ENCODE measurements at regions of chr7 and their contacts with region 1.

Region 1: GRCh38 chr7:104603957-104604356 is 275.6 kb downstream of the LHFPL3 start:
- DNase-seq: no peak
- ATAC-seq: no peak
- H3K4me3 ChIP-seq: no peak overlapping the region
- H3K27ac ChIP-seq: no peak overlapping the region
- H3K4me1 ChIP-seq: no peaks in the 10 kb centered on the region
- H3K27me3 ChIP-seq: no peaks in the 10 kb centered on the region; the same call in 1 of the 2 replicates
- CTCF ChIP-seq: no peak

Region 2: DNA sequence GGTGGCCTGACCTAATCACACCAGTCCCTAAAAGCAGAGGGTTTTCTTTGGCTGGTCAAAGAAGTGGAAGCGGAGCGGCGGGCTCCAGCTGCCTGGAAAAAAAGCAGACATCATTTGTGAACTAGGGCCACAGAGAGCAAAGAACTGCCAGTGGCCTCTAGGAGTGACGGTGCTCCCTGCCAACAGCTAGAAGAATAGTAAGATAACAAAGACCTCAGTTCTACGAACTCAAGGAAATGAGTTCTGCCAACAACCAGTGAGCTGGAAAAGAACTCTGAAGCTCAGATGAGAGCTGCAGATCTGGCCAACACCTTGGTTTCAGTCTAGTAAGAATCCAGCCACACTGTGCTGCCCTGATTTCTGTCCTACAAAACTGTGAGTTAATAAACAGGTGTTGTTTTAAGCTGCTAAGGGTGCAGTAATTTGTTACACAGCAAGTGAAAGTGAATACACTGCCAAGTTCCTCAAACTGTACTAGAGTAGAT is 606.8 kb after region 1 on chr7:
- CTCF ChIA-PET with region 1: no interaction called
- POLR2A ChIA-PET with region 1: no interaction called
- in situ Hi-C with region 1: no loop called
- intact Hi-C with region 1: no loop called
- DNase-seq: no peak
- ATAC-seq: peak; percentile 51
- H3K4me3 ChIP-seq: no peak overlapping the region
- H3K27ac ChIP-seq: no peak overlapping the region
- H3K4me1 ChIP-seq: no peaks in the 10 kb centered on the region; the same call in 1 of the 2 replicates
- H3K27me3 ChIP-seq: no peaks in the 10 kb centered on the region
- CTCF ChIP-seq: no peak

Region 3: DNA sequence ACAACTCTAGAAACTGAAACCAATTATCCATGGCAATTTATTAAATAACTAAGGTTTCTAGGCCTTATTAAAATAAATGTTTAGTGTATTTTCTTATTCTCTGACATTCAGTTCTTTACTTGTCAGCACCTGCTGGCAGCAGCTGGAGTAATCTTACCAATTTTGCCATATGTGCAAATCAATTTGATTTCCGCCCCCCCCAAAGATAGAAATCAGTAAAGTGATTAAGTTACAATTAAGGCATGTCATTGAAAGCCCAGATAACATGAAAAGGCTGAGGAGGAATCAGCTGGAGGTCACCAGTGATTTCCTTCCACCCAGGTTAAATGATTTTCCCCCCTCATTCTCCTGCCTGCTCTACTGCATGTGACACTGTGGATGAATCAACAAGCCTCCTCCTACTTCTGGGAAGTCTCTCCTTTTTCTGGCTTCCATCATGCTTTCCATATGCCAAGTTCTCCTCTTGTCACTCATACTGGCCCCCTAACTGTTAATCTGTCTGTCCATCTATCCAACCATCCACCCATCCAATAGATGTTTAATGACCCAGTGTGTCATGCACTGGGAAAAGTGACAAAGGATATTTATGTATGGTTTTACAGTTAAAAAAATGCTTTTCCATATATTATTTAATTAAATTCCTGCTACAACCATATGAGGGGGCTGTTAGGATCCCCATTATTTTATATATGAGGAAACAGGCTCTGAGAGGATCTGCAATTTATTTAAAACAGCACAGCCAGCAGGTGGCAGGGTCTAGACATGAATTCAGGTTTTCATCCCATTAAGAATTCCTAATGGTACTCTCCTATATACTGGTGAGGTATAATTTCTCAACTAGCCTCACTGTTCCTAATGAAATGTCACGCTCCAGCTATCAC is 1156.0 kb after region 1 on chr7:
- CTCF ChIA-PET with region 1: no interaction called
- POLR2A ChIA-PET with region 1: no interaction called
- in situ Hi-C with region 1: no loop called
- intact Hi-C with region 1: no loop called
- DNase-seq: no peak
- ATAC-seq: peak; percentile 82
- H3K4me3 ChIP-seq: no peak overlapping the region
- H3K27ac ChIP-seq: no peak overlapping the region
- H3K4me1 ChIP-seq: no peaks in the 10 kb centered on the region
- H3K27me3 ChIP-seq: no peaks in the 10 kb centered on the region
- CTCF ChIP-seq: peak; percentile 75

Region 4: DNA sequence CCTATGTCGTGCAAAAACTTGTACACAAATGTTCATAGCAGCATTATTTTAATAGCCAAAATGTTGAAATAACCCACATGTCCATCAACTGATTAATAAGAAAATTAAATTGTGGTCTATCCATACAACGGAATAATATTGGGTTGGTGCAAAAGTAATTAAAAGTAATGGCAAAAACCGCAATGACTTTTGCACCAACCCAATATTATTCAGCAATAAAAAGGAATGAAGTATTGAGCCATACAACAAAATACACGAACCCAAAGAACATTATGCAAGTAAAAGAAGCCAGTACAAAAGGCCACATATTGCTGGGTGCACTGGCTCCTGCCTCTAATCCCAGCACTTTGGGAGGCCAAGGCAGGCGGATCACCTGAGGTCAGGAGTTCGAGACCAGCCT is 1352.8 kb after region 1 on chr7:
- CTCF ChIA-PET with region 1: no interaction called
- POLR2A ChIA-PET with region 1: interaction called, 20 read pairs
- in situ Hi-C with region 1: no loop called
- intact Hi-C with region 1: no loop called
- DNase-seq: no peak
- ATAC-seq: no peak
- H3K4me3 ChIP-seq: no peak overlapping the region
- H3K27ac ChIP-seq: no peak overlapping the region
- H3K4me1 ChIP-seq: no peaks in the 10 kb centered on the region
- H3K27me3 ChIP-seq: no peaks in the 10 kb centered on the region
- CTCF ChIP-seq: no peak